Gastrocnemius medialis (tissue), 4 donors: ENCODE measurements at regions of chr16 and their contacts with region 1.

Region 1: GRCh38 chr16:73196670-73197069 is 148.7 kb upstream of the ZFHX3 start:
- DNase-seq: peak; percentile 51 to 80
- ATAC-seq: peak; percentile 91 to 99
- H3K4me3 ChIP-seq: no peak overlapping the region
- H3K27ac ChIP-seq: no peak overlapping the region
- H3K4me1 ChIP-seq: peaks cover 0 to 3% of the 10 kb centered on the region in 2 donors
- H3K27me3 ChIP-seq: no peaks in the 10 kb centered on the region
- CTCF ChIP-seq: peak; percentile 68 to 79 (median 73)
- POLR2A ChIP-seq: no peak

Region 2: GRCh38 chr16:72493716-72494415 is 702.8 kb before region 1 on chr16:
- in situ Hi-C with region 1: loop called in 1 of 4 experiments (anchors 10 kb)
- intact Hi-C with region 1: no loop called
- DNase-seq: no peak
- ATAC-seq: no peak
- H3K4me3 ChIP-seq: no peak overlapping the region
- H3K27ac ChIP-seq: no peak overlapping the region
- H3K4me1 ChIP-seq: no peaks in the 10 kb centered on the region
- H3K27me3 ChIP-seq: no peaks in the 10 kb centered on the region
- CTCF ChIP-seq: no peak
- POLR2A ChIP-seq: no peak

Region 3: DNA sequence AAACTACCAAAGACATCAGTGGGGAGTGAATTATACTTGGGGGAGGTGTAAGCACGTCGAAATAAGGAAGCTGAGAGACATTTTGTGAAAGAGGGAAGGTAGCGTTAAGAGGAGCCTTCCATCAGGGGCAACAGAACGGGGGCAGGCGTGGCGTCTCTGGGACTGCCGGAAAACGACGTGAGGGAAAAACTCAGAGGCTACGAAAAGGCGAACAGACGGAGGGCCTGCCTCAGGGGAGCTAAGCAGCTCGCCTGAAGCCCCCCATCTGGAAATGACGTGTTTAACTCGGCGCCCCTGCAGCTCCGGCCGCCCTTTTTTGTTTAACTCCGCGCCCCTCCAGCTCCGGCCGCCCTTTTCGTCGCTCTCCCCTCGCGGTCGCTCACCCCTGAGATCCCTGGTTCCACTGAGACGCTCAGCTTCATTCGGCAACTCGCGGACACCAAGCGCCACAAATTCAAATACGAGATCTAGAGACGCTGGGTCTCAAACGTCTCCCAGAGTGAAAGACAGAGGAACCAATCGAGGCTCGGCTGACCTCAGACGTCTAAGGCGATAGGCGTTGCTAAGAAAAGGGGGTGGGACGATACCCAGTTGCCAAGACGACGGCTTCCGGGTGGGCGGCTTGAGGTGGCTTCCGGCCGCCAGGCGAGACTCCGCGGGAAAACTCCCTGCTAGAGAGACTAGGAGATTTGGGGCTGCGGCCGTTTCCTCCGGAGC is 532.0 kb before region 1 on chr16:
- in situ Hi-C with region 1: loop called in 1 of 4 experiments (anchors 25 kb)
- intact Hi-C with region 1: loop called (anchors 10 kb)
- DNase-seq: peak; percentile 94
- ATAC-seq: peak; percentile 100
- H3K4me3 ChIP-seq: peak overlapping the region; percentile 73 to 86 (median 82)
- H3K27ac ChIP-seq: peak overlapping the region in 3 of 4 donors; percentile 34 to 38 (median 37)
- H3K4me1 ChIP-seq: peaks cover 7 to 18% of the 10 kb centered on the region in 2 donors
- H3K27me3 ChIP-seq: no peaks in the 10 kb centered on the region
- CTCF ChIP-seq: peak in 1 of 5 experiments; percentile 7
- POLR2A ChIP-seq: no peak

Region 4: DNA sequence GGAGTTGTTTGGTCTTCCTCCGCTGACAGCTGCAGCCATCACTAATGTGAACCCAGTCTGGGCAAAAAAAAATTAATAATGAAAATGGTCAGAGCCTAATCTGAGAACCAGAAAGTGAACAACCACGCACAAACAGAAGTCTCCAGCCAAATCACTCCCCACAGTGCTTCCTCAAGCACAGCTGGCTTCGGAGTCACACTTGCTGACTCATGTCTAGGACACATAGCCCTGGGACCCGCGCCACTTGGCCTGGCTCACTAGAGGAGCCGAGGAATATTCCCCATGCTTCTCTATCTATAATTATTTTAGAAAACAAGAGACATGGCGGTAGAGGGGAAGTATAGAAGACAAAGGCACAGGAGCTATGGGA is 257.9 kb before region 1 on chr16:
- in situ Hi-C with region 1: no loop called
- intact Hi-C with region 1: loop called (anchors 10 kb)
- DNase-seq: peak; percentile 90 to 93
- ATAC-seq: peak; percentile 87
- H3K4me3 ChIP-seq: peak overlapping the region; percentile 31 to 47 (median 36)
- H3K27ac ChIP-seq: peak overlapping the region; percentile 85 to 95 (median 88)
- H3K4me1 ChIP-seq: peaks cover 59 to 64% of the 10 kb centered on the region in 2 donors
- H3K27me3 ChIP-seq: no peaks in the 10 kb centered on the region
- CTCF ChIP-seq: no peak
- POLR2A ChIP-seq: peak in 1 of 2 donors; percentile 34

Region 5: GRCh38 chr16:73093146-73094144 is 103.2 kb before region 1 on chr16:
- in situ Hi-C with region 1: loop called in 1 of 4 experiments (anchors 25 kb)
- intact Hi-C with region 1: loop called (anchors 5 kb)
- DNase-seq: peak in 1 of 2 donors; percentile 51
- ATAC-seq: peak; percentile 57 to 60
- H3K4me3 ChIP-seq: peak overlapping the region; percentile 23 to 39 (median 32)
- H3K27ac ChIP-seq: peak overlapping the region; percentile 53 to 84 (median 62)
- H3K4me1 ChIP-seq: peaks cover 15 to 29% of the 10 kb centered on the region in 2 donors
- H3K27me3 ChIP-seq: no peaks in the 10 kb centered on the region
- CTCF ChIP-seq: no peak
- POLR2A ChIP-seq: no peak